ENCODE measurements at regions of chr2 and their contacts with region 1.

Region 1: DNA sequence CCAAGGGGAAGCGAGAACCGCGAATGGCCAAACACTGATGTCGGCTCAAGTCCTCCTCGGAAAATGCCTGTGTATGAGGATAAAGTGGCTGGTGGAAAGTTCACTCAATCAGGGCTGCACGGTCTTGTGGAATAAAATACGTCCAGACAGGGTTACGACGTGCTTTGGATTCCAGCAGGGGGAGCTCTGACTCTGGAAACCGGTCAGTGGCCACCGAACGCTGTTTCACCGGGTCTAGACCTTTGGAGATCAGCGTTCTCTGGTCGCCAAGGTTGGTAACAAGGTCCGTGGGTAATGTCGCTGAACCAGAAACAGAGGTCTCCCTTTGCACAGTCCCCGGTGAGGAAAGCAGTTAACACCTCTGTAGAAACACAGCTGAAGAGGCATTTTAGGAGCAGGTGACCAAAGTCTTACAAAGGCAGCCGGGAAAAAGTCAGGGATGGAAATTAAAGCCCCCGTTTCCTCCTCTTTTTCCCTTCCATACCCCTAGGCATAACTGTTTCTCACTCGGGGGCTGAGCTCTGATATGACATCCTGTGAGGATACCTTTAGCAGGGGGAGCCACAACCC is 47.8 kb downstream of the CDCA7 start:
- DNase-seq: peak; percentile 73
- H3K4me3 ChIP-seq: no peak overlapping the region
- H3K27ac ChIP-seq: no peak overlapping the region
- H3K4me1 ChIP-seq: no peaks in the 10 kb centered on the region
- H3K27me3 ChIP-seq: peaks cover 49 to 61% of the 10 kb centered on the region in 2 experiments
- CTCF ChIP-seq: peak; percentile 85 to 88
- POLR2A ChIP-seq: no peak

Region 2: GRCh38 chr2:173412628-173413027 is 10.1 kb after region 1 on chr2:
- CTCF ChIA-PET with region 1: interaction called, 14 read pairs
- POLR2A ChIA-PET with region 1: no interaction called
- dilution Hi-C with region 1: no loop called
- intact Hi-C with region 1: no loop called
- DNase-seq: no peak
- H3K4me3 ChIP-seq: no peak overlapping the region
- H3K27ac ChIP-seq: no peak overlapping the region
- H3K4me1 ChIP-seq: no peaks in the 10 kb centered on the region
- H3K27me3 ChIP-seq: peaks cover 0 to 9% of the 10 kb centered on the region in 2 experiments
- CTCF ChIP-seq: no peak
- POLR2A ChIP-seq: no peak

Region 3: DNA sequence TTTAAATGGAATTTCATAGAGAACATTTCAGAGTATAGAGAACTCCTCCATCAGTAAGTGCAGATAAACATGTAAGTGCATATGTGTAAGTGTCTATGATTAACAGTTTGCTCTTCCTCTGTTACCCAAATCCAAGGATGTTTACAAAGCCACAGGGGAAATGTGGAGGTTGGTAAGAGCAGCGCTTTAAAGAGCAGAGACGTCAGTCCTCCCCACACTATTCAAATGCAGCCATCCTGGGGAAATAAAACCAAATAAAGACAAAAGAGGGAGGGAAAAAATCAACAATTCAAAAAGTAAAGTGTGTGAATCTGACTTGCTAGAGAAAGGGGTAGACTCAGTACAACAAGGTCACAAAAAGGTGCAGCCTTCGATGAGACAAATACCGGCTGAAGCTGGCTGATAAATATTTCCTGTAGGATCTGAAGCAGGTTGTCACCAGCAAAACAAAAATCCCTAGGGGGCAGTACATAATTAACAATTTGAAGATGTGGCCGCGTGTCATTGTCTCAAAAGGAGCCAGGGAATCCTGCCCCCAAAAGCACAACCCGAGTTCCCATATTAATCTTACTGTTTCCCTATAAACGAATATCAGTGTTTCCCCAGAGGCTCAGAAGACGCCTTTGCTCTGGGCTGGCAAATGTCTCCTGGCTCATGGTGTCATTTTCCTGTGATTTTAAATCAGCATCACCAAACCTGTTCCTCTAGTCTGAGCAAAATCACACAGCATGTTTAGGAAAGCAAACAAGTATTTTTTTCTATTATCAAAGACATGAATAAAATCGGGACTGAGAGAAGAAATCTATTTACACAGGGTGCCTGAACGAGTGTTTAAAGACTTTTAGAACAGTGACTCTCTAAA is 168.8 kb after region 1 on chr2:
- CTCF ChIA-PET with region 1: interaction called, 33 read pairs
- POLR2A ChIA-PET with region 1: no interaction called
- dilution Hi-C with region 1: no loop called
- intact Hi-C with region 1: loop called (anchors 1 kb)
- DNase-seq: peak; percentile 43
- H3K4me3 ChIP-seq: no peak overlapping the region
- H3K27ac ChIP-seq: no peak overlapping the region
- H3K4me1 ChIP-seq: peaks cover 13% of the 10 kb centered on the region
- H3K27me3 ChIP-seq: no peaks in the 10 kb centered on the region
- CTCF ChIP-seq: peak; percentile 5 to 23
- POLR2A ChIP-seq: no peak

Region 4: DNA sequence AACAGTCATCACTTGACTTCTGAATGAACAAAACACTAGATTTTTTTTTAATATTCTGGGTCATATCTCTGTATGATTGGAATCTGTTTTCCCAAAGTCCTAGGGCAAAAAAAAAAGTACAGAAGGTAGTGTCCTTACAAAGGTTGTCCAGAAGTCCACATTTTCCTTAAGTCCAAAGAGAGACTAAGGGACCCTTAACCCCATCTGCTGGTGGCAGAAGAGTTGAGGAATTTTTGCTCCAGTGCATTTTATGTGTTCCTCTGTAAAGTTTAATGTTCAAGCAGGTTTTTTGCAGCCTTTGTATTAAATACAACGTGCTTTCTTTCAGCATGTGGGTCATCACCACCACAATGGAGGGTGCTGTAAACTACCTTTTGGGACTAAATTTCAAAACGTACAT is 346.8 kb after region 1 on chr2:
- CTCF ChIA-PET with region 1: interaction called, 12 read pairs
- POLR2A ChIA-PET with region 1: no interaction called
- dilution Hi-C with region 1: no loop called
- intact Hi-C with region 1: loop called (anchors 10 kb)
- DNase-seq: peak; percentile 8
- H3K4me3 ChIP-seq: no peak overlapping the region
- H3K27ac ChIP-seq: no peak overlapping the region
- H3K4me1 ChIP-seq: no peaks in the 10 kb centered on the region
- H3K27me3 ChIP-seq: peaks cover 4 to 10% of the 10 kb centered on the region in 2 experiments
- CTCF ChIP-seq: no peak
- POLR2A ChIP-seq: no peak

Region 5: DNA sequence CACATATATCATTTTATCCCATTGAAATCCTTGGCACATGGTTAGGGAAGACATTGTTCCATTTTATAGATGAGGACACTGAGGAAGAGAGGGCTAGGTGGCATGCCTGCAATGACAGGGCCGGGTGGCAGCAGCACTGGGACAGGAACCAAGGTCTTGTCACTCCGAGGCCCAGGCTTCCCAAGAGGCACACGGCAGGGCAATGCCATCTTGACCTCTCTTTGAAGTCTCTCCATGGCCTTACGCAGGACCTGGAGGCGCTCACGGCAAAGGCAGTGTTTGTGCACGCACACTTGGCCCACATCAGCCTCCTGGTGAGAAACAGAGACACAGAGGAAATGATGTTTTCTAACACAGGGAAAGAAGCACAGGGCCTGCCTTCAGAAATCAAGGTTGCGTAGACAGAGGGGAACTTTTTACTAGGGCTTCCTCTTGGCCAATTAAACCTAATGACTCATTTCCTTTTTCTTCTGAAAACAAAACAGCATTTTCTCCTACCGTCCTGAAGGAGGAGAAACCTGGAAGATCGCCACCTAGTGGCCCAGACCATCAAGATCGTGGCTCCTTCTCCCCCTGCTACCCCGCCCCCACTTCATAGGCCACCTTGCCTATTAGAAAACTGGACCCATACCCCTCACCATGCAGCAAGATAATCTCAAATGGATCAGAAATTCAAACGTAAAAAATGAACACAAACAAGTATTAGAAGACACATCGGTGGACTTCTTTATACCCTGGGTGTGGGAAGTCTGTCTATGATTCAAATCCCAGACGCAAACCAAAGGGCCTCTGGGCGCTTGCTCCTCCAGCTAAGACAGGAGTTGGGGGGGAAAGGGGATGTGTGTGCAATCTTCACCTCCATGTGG is 637.3 kb after region 1 on chr2:
- CTCF ChIA-PET with region 1: interaction called, 3 read pairs
- POLR2A ChIA-PET with region 1: no interaction called
- dilution Hi-C with region 1: no loop called
- intact Hi-C with region 1: loop called (anchors 1 kb)
- DNase-seq: peak; percentile 97
- H3K4me3 ChIP-seq: no peak overlapping the region
- H3K27ac ChIP-seq: peak overlapping the region; percentile 67
- H3K4me1 ChIP-seq: peaks cover 16% of the 10 kb centered on the region
- H3K27me3 ChIP-seq: no peaks in the 10 kb centered on the region
- CTCF ChIP-seq: peak; percentile 86 to 93
- POLR2A ChIP-seq: no peak

Region 6: GRCh38 chr2:174465327-174465726 is 1062.8 kb after region 1 on chr2:
- CTCF ChIA-PET with region 1: interaction called, 6 read pairs
- POLR2A ChIA-PET with region 1: no interaction called
- dilution Hi-C with region 1: no loop called
- intact Hi-C with region 1: loop called (anchors 10 kb)
- DNase-seq: no peak
- H3K4me3 ChIP-seq: no peak overlapping the region
- H3K27ac ChIP-seq: no peak overlapping the region
- H3K4me1 ChIP-seq: no peaks in the 10 kb centered on the region
- H3K27me3 ChIP-seq: no peaks in the 10 kb centered on the region
- CTCF ChIP-seq: no peak
- POLR2A ChIP-seq: no peak

Measured in endothelial cell of umbilical vein (primary cell).